CD14-positive monocyte (primary cell): ENCODE measurements at regions of chr1 and their contacts with region 1.

Region 1: DNA sequence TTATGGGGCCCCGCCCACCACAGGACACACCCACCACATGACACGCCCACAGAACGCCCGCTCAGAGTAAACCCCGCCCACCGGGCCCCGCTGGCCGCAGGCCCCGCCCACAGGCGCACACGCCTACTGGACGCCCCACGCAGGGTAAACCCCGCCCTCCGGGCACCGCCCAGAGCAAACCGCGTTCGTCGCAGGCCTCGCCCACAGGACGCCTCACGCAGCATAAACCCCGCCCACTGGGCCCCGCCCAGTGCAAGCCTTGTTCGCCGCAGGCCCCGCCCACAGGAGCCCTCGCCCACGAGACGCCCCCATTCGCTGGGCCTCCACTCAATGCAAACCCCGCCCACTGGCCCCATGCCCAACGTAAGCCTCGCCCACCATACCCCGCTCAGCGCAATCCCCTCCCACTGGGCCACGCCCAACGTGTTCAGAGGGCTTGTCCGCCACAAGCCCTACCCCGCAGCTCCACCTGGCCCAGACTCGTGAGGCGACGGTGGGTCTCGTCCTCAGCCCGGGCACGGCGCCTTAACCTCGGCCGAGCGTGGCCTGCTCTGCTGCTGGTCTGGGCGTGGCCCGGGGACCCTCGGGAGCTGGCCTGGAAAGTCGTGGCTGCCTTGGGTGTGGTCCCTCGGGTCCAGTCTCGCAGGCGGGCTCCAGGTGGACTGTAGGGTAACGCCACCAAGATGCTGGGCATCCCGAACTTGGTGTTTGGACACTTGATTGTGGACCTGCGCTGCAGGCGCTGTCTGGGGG is 401 bp upstream of the TMEM52 start:
- DNase-seq: peak; percentile 99
- H3K4me3 ChIP-seq: peak overlapping the region; percentile 41 to 79 (median 56)
- H3K4me3 Mint-ChIP-seq: peak overlapping the region; percentile 78 to 89
- H3K27ac ChIP-seq: peak overlapping the region in 1 of 2 donors; percentile 5
- H3K27ac Mint-ChIP-seq: peak overlapping the region in 5 of 7 donors; percentile 62 to 90 (median 75)
- H3K4me1 ChIP-seq: peaks cover 13 to 19% of the 10 kb centered on the region in 2 donors
- H3K4me1 Mint-ChIP-seq: peaks cover 7% of the 10 kb centered on the region
- H3K27me3 ChIP-seq: peaks cover 0 to 14% of the 10 kb centered on the region in 2 donors
- H3K27me3 Mint-ChIP-seq: peaks cover 2 to 18% (median 12%) of the 10 kb centered on the region in 3 donors
- CTCF ChIP-seq: no peak

Region 2: GRCh38 chr1:788835-789234 is 1130.6 kb before region 1 on chr1:
- intact Hi-C with region 1: no loop called
- DNase-seq: no peak
- H3K4me3 ChIP-seq: no peak overlapping the region
- H3K4me3 Mint-ChIP-seq: no peak overlapping the region
- H3K27ac ChIP-seq: no peak overlapping the region
- H3K27ac Mint-ChIP-seq: no peak overlapping the region
- H3K4me1 ChIP-seq: no peaks in the 10 kb centered on the region
- H3K4me1 Mint-ChIP-seq: no peaks in the 10 kb centered on the region
- H3K27me3 ChIP-seq: no peaks in the 10 kb centered on the region
- H3K27me3 Mint-ChIP-seq: no peaks in the 10 kb centered on the region
- CTCF ChIP-seq: no peak

Region 3: GRCh38 chr1:1906185-1907097 is 13.0 kb before region 1 on chr1:
- intact Hi-C with region 1: loop called (anchors 1 kb)
- DNase-seq: peak; percentile 80 to 85 (median 81)
- H3K4me3 ChIP-seq: no peak overlapping the region
- H3K4me3 Mint-ChIP-seq: peak overlapping the region in 1 of 2 donors; percentile 17
- H3K27ac ChIP-seq: no peak overlapping the region
- H3K27ac Mint-ChIP-seq: peak overlapping the region in 4 of 7 donors; percentile 35 to 80 (median 50)
- H3K4me1 ChIP-seq: peaks cover 13 to 17% of the 10 kb centered on the region in 2 donors
- H3K4me1 Mint-ChIP-seq: peaks cover 14% of the 10 kb centered on the region
- H3K27me3 ChIP-seq: peaks cover 0 to 5% of the 10 kb centered on the region in 2 donors
- H3K27me3 Mint-ChIP-seq: peaks cover 3 to 7% (median 6%) of the 10 kb centered on the region in 3 donors
- CTCF ChIP-seq: peak; percentile 84

Region 4: GRCh38 chr1:1989102-1989542 is 69.6 kb after region 1 on chr1:
- intact Hi-C with region 1: no loop called
- DNase-seq: no peak
- H3K4me3 ChIP-seq: no peak overlapping the region
- H3K4me3 Mint-ChIP-seq: no peak overlapping the region
- H3K27ac ChIP-seq: no peak overlapping the region
- H3K27ac Mint-ChIP-seq: no peak overlapping the region
- H3K4me1 ChIP-seq: no peaks in the 10 kb centered on the region
- H3K4me1 Mint-ChIP-seq: peaks cover 9% of the 10 kb centered on the region
- H3K27me3 ChIP-seq: no peaks in the 10 kb centered on the region
- H3K27me3 Mint-ChIP-seq: peaks cover 1 to 22% (median 9%) of the 10 kb centered on the region in 3 donors
- CTCF ChIP-seq: no peak

Region 5: DNA sequence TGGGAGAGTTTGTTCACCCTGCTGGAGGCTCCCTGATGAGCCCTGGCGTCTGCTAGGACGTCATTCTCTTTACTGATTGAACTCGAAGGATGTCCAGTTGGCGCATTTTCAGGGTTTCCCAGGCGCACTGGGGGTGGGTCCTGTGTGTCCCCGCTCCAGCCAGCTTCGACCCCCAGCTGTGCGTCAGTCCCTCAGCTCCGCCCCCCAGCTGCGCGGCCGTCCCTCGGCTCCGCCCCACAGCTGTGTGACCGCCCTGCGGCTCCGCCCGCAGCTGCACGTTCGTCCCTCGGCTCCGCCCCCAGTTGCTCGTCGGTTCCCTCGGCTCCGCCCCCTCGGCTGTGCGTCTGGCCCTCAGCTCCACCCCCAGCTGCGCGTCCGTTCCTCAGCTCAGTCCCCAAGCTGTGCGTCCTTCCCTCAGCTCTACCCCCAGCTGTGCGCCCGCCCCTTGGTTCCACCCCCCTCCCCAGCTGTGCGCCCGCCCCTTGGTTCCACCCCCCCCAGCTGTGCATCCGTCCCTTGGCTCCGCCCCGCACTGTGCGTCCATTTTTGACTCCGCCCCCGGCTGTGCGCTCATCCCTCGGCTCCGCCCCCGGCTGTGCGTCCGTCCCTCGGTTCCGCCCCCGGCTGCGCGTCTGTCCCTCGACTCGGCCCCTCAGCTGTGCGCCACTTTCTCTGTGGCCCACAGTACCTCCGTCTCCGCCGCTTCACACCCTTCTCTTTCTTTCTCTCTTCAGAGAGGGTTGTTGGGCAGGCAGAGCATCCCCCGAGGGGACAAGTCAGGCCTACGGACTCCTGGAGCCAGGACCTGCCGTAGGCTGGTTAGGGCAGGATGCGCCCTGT is 213.8 kb after region 1 on chr1:
- intact Hi-C with region 1: loop called (anchors 2 to 10 kb)
- DNase-seq: peak; percentile 97 to 99 (median 99)
- H3K4me3 ChIP-seq: peak overlapping the region; percentile 36 to 76 (median 40)
- H3K4me3 Mint-ChIP-seq: peak overlapping the region; percentile 81 to 88
- H3K27ac ChIP-seq: peak overlapping the region; percentile 63 to 87
- H3K27ac Mint-ChIP-seq: peak overlapping the region; percentile 93 to 97 (median 95)
- H3K4me1 ChIP-seq: peaks cover 15 to 23% of the 10 kb centered on the region in 2 donors
- H3K4me1 Mint-ChIP-seq: peaks cover 12% of the 10 kb centered on the region
- H3K27me3 ChIP-seq: peaks cover 0 to under 1% of the 10 kb centered on the region in 2 donors
- H3K27me3 Mint-ChIP-seq: peaks cover 7 to 16% (median 13%) of the 10 kb centered on the region in 3 donors
- CTCF ChIP-seq: no peak

Region 6: GRCh38 chr1:2205191-2205952 is 285.9 kb after region 1 on chr1:
- intact Hi-C with region 1: loop called in 1 of 2 experiments (anchors 5 kb)
- DNase-seq: peak; percentile 88 to 96 (median 93)
- H3K4me3 ChIP-seq: peak overlapping the region; percentile 18 to 74 (median 36)
- H3K4me3 Mint-ChIP-seq: peak overlapping the region; percentile 59 to 76
- H3K27ac ChIP-seq: no peak overlapping the region
- H3K27ac Mint-ChIP-seq: no peak overlapping the region
- H3K4me1 ChIP-seq: peaks cover 12 to 19% of the 10 kb centered on the region in 2 donors
- H3K4me1 Mint-ChIP-seq: peaks cover 9% of the 10 kb centered on the region
- H3K27me3 ChIP-seq: peaks cover 0 to 9% of the 10 kb centered on the region in 2 donors
- H3K27me3 Mint-ChIP-seq: peaks cover 18 to 37% (median 23%) of the 10 kb centered on the region in 3 donors
- CTCF ChIP-seq: no peak